ENCODE measurements at regions of chr9 and their contacts with region 1.

Region 1: DNA sequence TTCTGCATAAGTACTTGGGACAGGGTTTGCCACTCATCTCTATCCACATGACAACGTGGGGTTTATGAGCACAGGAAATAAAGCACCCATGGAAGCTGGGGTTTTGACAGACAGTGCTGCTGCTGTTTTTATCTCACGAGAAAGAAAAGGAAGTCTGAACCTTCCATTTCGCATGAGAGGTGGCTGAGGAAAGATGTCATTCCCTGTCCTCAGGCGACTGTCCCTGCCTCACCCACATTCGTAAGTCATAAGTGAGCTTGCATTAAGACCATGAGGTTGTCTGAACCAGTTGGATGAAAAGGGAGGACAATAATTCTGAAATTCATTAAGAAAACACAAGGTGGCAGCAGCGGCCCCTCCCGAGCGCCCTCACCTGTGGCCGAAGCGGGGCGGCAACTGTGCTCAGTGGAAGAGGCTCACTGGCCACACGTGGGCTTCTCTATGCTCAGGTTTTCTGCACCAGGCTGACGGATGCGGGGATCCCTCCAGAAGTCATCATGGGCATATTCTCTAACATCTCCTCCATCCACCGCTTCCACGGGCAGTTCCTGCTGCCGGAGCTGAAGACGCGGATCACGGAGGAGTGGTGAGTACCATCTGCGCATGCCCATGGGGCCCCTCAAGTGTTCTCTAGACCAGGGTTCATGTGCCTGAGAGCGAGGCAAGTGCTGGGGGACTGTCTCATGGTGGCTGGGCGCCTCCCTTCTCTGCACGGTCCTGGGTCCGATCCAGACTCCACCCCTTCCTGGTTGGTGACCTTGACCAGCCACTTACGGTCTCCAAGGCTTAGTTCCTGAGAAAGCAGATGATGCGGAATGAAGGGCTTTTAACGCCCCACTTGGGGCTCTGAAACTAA is 54.7 kb upstream of the SUSD3 start:
- DNase-seq: peak in 8 of 9 donors; percentile 55 to 77 (median 70)
- ATAC-seq: peak; percentile 88
- H3K4me3 ChIP-seq: peak overlapping the region; percentile 21
- H3K4me3 Mint-ChIP-seq: peak overlapping the region in 9 of 10 donors; percentile 54 to 72 (median 69)
- H3K27ac ChIP-seq: peak overlapping the region; percentile 56
- H3K27ac Mint-ChIP-seq: peak overlapping the region; percentile 81 to 98 (median 91)
- H3K4me1 ChIP-seq: peaks cover 47 to 60% of the 10 kb centered on the region in 2 donors
- H3K4me1 Mint-ChIP-seq: peaks cover 38 to 76% (median 67%) of the 10 kb centered on the region in 7 donors
- H3K27me3 ChIP-seq: no peaks in the 10 kb centered on the region
- H3K27me3 Mint-ChIP-seq: no peaks in the 10 kb centered on the region

Region 2: DNA sequence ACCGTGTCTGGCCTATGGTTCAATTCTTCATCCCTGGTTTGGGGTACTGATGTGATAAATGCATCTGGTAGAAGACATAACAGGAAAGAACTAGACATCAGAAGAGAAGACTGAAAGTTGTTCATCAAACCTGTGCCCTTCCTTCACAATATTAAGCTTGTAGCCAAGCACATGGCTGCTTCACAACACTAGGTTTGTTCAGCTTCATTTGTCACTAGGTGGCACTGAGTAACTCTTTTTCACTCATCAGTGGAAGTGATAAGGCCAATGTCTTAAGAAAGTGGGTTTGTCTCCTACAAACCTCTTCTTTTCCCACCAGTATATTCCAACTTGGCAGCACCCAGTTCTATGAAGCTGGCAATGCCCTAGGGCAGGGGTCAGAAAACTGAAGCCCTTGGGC is 152.9 kb before region 1 on chr9:
- CTCF ChIA-PET with region 1: interaction called, 4 read pairs
- POLR2A ChIA-PET with region 1: no interaction called
- intact Hi-C with region 1: loop called in 1 of 2 experiments (anchors 1 kb)
- DNase-seq: peak in 7 of 9 donors; percentile 22 to 46 (median 27)
- ATAC-seq: no peak
- H3K4me3 ChIP-seq: no peak overlapping the region
- H3K4me3 Mint-ChIP-seq: no peak overlapping the region
- H3K27ac ChIP-seq: no peak overlapping the region
- H3K27ac Mint-ChIP-seq: peak overlapping the region in 3 of 9 donors; percentile 8 to 84 (median 42)
- H3K4me1 ChIP-seq: peaks cover 0 to 4% of the 10 kb centered on the region in 2 donors
- H3K4me1 Mint-ChIP-seq: peaks cover 0 to 17% (median 6%) of the 10 kb centered on the region in 7 donors
- H3K27me3 ChIP-seq: no peaks in the 10 kb centered on the region
- H3K27me3 Mint-ChIP-seq: no peaks in the 10 kb centered on the region

Region 3: DNA sequence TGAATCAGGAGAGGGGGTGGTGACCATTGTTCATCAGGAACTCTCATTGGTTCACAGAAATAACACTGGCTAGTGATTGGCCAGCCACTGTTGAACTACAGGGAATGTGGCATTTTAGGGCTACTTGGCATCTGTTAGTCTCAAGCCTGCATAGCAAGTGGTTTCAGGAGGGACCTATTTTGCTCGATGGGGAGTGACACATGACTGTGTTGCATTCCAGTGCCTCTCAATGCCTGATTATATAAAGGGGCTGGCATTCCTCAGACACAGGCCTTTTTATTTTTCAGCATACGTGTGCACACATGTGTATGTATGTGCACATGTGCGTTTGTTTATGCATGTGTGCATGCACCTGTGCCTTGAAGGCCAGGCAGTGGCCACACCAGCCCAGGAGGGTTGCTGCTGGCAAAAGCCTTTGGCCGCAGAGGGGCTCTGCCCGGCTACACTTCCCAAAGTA is 33.3 kb before region 1 on chr9:
- CTCF ChIA-PET with region 1: interaction called, 11 read pairs
- POLR2A ChIA-PET with region 1: interaction called, 113 read pairs
- intact Hi-C with region 1: loop called in 1 of 2 experiments (anchors 2 kb)
- DNase-seq: no peak
- ATAC-seq: no peak
- H3K4me3 ChIP-seq: peak overlapping the region; percentile 34
- H3K4me3 Mint-ChIP-seq: peak overlapping the region; percentile 86 to 98 (median 93)
- H3K27ac ChIP-seq: peak overlapping the region; percentile 85
- H3K27ac Mint-ChIP-seq: peak overlapping the region; percentile 89 to 99 (median 98)
- H3K4me1 ChIP-seq: peaks cover 71 to 79% of the 10 kb centered on the region in 2 donors
- H3K4me1 Mint-ChIP-seq: peaks cover 67 to 84% (median 82%) of the 10 kb centered on the region in 7 donors
- H3K27me3 ChIP-seq: no peaks in the 10 kb centered on the region
- H3K27me3 Mint-ChIP-seq: no peaks in the 10 kb centered on the region

Region 4: DNA sequence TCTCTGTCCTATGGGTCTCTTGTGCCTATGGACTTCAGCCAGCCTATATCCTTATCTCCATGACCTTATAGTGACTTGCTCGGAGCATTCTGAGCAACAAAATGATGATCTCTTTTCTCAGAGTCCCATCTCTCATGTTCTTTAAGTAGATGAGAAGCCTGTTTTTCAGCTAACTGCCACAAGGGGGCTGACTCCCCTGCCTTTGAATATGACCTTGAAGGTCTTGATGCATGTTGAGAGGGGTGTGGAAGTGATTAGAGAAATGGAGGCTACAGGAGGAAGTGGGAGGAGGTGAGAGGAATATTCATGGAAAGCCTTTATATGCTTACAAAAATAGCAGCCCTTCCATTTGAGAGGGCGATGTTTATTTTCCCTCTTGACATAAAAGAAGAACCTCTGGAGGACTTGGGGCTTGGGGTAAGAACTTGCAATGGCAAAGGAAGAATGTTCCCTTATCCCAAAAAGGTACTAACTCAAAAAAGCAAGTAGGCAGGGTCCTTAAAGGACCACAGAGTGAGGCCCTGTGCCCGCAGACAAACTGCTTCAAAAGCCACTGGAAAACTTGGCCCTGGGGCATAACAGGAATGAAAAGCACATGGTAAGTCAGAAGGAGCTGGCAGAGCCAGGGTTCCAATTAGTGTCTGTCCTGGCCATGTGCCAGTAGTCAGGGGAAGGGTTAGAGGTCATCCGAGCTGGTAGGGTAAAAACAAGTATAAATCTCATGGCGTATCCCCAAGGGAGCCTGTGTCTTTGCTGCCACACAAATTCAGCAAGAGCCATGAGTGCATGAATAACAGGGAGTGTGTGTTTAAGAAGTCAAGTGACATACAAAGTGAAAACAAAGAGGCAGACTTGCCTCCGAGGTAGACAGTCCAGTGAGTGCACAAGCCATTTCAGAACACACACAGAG is 17.3 kb before region 1 on chr9:
- CTCF ChIA-PET with region 1: interaction called, 13 read pairs
- POLR2A ChIA-PET with region 1: interaction called, 23 read pairs
- intact Hi-C with region 1: loop called in 1 of 2 experiments (anchors 1 kb)
- DNase-seq: peak in 7 of 9 donors; percentile 52 to 66 (median 57)
- ATAC-seq: peak; percentile 75
- H3K4me3 ChIP-seq: no peak overlapping the region
- H3K4me3 Mint-ChIP-seq: peak overlapping the region; percentile 34 to 71 (median 62)
- H3K27ac ChIP-seq: peak overlapping the region; percentile 59
- H3K27ac Mint-ChIP-seq: peak overlapping the region; percentile 56 to 95 (median 86)
- H3K4me1 ChIP-seq: peaks cover 65 to 71% of the 10 kb centered on the region in 2 donors
- H3K4me1 Mint-ChIP-seq: peaks cover 66 to 93% (median 89%) of the 10 kb centered on the region in 7 donors
- H3K27me3 ChIP-seq: no peaks in the 10 kb centered on the region
- H3K27me3 Mint-ChIP-seq: no peaks in the 10 kb centered on the region

Region 5: DNA sequence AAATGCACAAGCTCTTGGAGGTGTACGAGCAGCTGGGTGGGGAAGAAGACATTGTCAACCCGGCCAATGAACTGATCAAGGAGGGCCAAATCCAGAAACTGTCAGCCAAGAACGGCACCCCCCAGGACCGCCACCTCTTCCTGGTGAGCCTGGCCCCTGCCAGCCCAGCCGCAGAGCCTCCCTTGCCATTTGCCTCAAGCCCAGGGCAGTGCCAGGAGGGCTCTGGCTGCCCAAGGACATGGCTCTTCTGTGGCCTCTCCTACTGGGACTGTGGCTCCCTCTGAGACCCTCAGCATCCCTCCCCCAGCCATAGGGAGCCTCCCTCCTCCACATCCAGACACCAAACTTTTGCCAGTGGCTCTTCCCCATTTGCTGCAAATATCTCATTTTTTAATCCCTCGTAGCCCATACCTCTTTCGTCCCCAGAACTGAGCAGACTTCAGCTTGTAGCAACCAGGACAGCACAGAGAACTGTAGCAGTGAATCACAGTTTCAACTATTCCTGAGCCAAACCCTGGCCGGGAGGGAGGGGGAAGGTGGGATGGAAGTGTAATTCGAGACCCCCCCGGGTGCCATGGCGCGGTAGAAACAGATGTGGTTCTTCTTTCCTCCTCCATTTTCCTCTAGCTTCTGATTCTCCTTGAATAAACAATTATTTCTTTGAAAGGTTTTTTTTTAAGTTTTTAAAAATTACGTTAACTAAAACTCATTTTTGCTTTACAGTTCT is 10.2 kb after region 1 on chr9:
- CTCF ChIA-PET with region 1: interaction called, 16 read pairs
- POLR2A ChIA-PET with region 1: interaction called, 34 read pairs
- intact Hi-C with region 1: loop called in 1 of 2 experiments (anchors 1 kb)
- DNase-seq: no peak
- ATAC-seq: no peak
- H3K4me3 ChIP-seq: no peak overlapping the region
- H3K4me3 Mint-ChIP-seq: peak overlapping the region in 2 of 10 donors; percentile 14 to 20
- H3K27ac ChIP-seq: peak overlapping the region; percentile 0
- H3K27ac Mint-ChIP-seq: peak overlapping the region in 8 of 9 donors; percentile 27 to 91 (median 84)
- H3K4me1 ChIP-seq: peaks cover 0 to 8% of the 10 kb centered on the region in 2 donors
- H3K4me1 Mint-ChIP-seq: peaks cover 14 to 46% (median 25%) of the 10 kb centered on the region in 7 donors
- H3K27me3 ChIP-seq: no peaks in the 10 kb centered on the region
- H3K27me3 Mint-ChIP-seq: no peaks in the 10 kb centered on the region

Region 6: DNA sequence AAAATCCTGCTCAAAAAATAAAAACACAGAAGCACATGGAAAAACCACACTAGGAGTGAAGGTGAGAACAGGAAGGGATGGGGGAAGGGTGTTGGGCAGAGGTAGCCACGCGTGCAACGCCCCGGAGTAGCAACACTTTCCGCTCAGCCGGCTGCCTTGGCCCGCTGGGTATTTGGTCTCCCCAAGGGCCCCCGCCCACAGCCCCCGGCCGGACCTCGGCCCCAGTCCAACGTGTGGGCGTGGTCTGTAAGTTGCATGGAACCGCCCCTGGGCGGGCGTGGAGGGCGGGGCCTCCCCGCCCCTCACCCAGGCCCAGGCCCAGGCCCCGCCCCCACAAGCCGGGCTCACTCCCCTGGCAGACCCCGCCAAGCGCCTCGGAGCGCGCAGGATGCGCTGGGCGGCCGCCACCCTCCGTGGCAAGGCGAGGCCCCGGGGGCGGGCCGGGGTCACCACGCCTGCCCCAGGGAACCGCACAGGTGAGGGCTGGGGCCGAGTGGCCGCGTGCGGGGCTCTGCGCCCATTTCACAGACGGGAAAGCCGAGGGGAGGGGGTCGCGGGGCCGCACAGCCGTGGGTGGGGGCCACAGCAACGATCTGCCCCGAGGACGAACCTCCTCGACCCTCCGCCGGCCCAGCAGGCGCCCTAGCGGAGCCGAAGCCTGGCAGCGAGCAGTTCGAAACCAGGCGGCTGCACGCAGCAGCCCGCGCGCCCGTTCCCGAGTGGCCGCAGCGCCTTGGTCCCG is 54.7 kb after region 1 on chr9 and contains the start of gene SUSD3:
- CTCF ChIA-PET with region 1: interaction called, 6 read pairs
- POLR2A ChIA-PET with region 1: interaction called, 13 read pairs
- intact Hi-C with region 1: no loop called
- DNase-seq: peak; percentile 47 to 82 (median 65)
- ATAC-seq: peak; percentile 81
- H3K4me3 ChIP-seq: peak within 1 kb of the TSS; percentile 90
- H3K4me3 Mint-ChIP-seq: peak within 1 kb of the TSS; percentile 93 to 97 (median 94)
- H3K27ac ChIP-seq: peak within 1 kb of the TSS; percentile 88
- H3K27ac Mint-ChIP-seq: peak within 1 kb of the TSS; percentile 97 to 100 (median 99)
- H3K4me1 ChIP-seq: peaks cover 52 to 56% of the 10 kb centered on the region in 2 donors
- H3K4me1 Mint-ChIP-seq: peaks cover 31 to 78% (median 65%) of the 10 kb centered on the region in 7 donors
- H3K27me3 ChIP-seq: no peaks in the 10 kb centered on the region
- H3K27me3 Mint-ChIP-seq: no peaks in the 10 kb centered on the region
- total RNA-seq, gene SUSD3: 62.8 to 83.5 (median 68.7) TPM

Region 7: GRCh38 chr9:93108291-93109041 is 104.7 kb after region 1 on chr9:
- CTCF ChIA-PET with region 1: interaction called, 12 read pairs
- POLR2A ChIA-PET with region 1: interaction called, 3 read pairs
- intact Hi-C with region 1: no loop called
- DNase-seq: peak in 2 of 9 donors; percentile 6 to 59
- ATAC-seq: no peak
- H3K4me3 ChIP-seq: no peak overlapping the region
- H3K4me3 Mint-ChIP-seq: peak overlapping the region in 2 of 10 donors; percentile 39 to 56
- H3K27ac ChIP-seq: peak overlapping the region; percentile 10
- H3K27ac Mint-ChIP-seq: peak overlapping the region in 8 of 9 donors; percentile 38 to 82 (median 62)
- H3K4me1 ChIP-seq: peaks cover 15 to 34% of the 10 kb centered on the region in 2 donors
- H3K4me1 Mint-ChIP-seq: peaks cover 34 to 53% (median 48%) of the 10 kb centered on the region in 7 donors
- H3K27me3 ChIP-seq: no peaks in the 10 kb centered on the region
- H3K27me3 Mint-ChIP-seq: no peaks in the 10 kb centered on the region

Region 8: GRCh38 chr9:93575796-93576257 is 572.0 kb after region 1 on chr9:
- CTCF ChIA-PET with region 1: no interaction called
- POLR2A ChIA-PET with region 1: no interaction called
- intact Hi-C with region 1: no loop called
- DNase-seq: peak in 8 of 9 donors; percentile 30 to 62 (median 44)
- ATAC-seq: peak; percentile 59
- H3K4me3 ChIP-seq: peak overlapping the region; percentile 70
- H3K4me3 Mint-ChIP-seq: peak overlapping the region; percentile 72 to 94 (median 90)
- H3K27ac ChIP-seq: peak overlapping the region; percentile 91
- H3K27ac Mint-ChIP-seq: peak overlapping the region; percentile 72 to 95 (median 93)
- H3K4me1 ChIP-seq: peaks cover 15 to 32% of the 10 kb centered on the region in 2 donors
- H3K4me1 Mint-ChIP-seq: peaks cover 38 to 55% (median 45%) of the 10 kb centered on the region in 7 donors
- H3K27me3 ChIP-seq: no peaks in the 10 kb centered on the region
- H3K27me3 Mint-ChIP-seq: no peaks in the 10 kb centered on the region